Astrocyte of the cerebellum (primary cell): ENCODE measurements at regions of chr4 and their contacts with region 1.

Region 1: DNA sequence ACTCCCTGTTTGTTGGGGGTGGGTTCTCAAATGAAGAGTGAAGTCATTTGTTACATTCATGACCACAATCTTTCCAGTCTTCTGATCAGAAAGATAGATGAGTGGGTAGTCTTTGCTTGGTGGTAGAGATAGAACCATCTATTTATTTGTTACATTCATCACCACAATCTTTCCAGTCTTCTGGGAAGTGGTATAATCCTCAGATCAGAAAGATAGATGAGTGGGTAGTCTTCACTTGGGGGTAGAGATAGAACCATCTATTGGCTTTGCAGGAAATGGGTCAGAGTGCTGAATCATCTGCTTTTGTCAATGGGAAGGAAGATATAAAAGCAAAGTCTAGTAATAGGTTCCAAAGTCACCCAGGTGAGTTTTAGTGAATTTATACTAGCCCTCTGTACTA is 64.2 kb upstream of the EPGN start:
- DNase-seq: no peak
- H3K4me3 ChIP-seq: no peak overlapping the region
- CTCF ChIP-seq: no peak

Region 2: DNA sequence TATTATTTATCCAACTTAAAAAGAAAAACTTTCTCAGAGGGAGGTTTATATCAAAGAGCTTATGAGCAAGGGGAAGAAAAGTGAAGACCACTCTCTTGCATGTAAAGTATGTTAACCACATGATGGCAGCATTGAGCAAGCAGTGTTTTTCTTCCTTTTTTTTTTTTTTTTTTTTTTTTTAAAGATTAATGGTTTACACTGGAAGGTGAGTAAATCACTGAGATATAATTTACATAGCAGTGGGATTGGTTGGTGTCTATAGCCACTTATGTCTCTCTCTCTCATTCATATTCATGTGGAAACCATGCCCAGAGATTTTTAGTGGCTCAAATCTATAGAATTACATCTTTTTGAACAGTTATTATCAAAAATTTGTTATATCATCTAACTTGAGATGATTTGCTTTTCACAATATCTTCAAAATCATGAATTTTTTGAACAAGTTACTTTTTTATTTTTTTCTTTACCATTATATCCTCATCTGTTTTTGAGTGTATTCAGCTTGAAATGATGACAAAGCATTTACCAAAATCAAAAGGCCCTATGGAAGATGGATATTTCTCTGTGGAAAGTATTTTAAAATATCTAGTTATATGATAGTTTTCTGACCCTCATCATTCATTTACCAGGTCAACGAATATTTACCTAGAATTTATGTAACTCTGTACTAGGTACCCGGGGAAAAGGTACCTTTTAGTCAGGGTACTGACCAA is 54.6 kb before region 1 on chr4:
- in situ Hi-C with region 1: loop called (anchors 5 kb)
- DNase-seq: peak; percentile 51
- H3K4me3 ChIP-seq: no peak overlapping the region
- CTCF ChIP-seq: peak; percentile 64

Region 3: GRCh38 chr4:74206088-74206825 is 37.8 kb before region 1 on chr4:
- in situ Hi-C with region 1: no loop called
- DNase-seq: peak; percentile 38
- H3K4me3 ChIP-seq: no peak overlapping the region
- CTCF ChIP-seq: no peak

Region 4: GRCh38 chr4:74308215-74308614 is 64.2 kb after region 1 on chr4 and contains the start of gene EPGN:
- in situ Hi-C with region 1: no loop called
- DNase-seq: no peak
- H3K4me3 ChIP-seq: no peak within 1 kb of the TSS
- CTCF ChIP-seq: no peak